A673 (cell line): ENCODE measurements at regions of chr4 and their contacts with region 1.

Region 1: GRCh38 chr4:6716018-6716911 is at the start of gene BLOC1S4:
- DNase-seq: peak; percentile 94
- H3K4me3 ChIP-seq: peak within 1 kb of the TSS; percentile 91
- H3K27ac ChIP-seq: peak within 1 kb of the TSS; percentile 80
- H3K4me1 ChIP-seq: peaks cover 6% of the 10 kb centered on the region
- H3K27me3 ChIP-seq: no peaks in the 10 kb centered on the region
- CTCF ChIP-seq: no peak
- total RNA-seq, gene BLOC1S4: 12.3 and 13.2 TPM in 2 replicates

Region 2: DNA sequence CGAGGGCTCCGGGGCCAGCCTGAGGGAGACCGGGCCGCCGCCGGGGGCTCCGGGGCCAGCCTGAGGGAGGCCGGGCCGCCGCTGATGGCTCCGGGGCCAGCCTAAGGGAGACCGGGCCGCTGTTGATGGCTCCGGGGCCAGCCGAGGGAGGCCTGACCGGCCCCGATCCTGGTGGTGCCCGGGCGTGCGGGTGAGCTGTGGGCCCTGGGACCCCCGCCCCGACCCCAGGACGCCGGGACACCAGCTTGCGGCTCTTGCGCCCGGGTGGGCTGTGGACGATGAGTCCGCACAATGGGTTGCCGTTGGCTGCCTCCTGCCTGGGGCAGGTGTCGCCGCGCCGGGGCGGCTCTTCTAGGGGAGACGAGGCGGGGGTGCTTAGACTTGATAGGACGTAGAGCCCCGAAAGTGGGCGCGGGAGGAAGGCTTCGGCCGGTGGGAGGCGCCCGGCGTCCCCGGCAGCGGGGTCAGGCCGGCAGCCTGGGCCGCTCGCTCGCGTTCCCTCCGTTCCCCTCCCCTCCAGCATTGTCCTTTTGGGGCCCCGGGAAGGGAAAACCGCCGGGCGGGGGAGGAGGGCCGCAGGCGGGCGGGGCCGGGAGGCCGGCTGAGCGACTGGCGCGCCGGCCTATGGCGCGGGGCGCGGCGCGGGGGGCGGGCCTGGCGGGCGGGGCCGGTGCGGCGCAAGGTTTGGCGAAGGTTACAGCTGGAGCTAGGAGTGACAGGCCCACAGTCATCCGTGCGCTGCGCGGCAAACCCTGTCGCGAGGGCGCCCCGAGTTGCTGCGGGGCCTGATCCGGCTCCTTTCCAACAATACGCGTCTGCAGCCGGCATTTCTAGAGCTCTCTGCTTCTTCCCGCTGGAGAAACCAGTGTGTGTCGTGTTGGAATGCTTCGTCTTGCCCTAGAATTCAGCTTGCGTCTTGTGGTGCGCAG is 67.1 kb after region 1 on chr4:
- CTCF ChIA-PET with region 1: no interaction called
- POLR2A ChIA-PET with region 1: no interaction called
- intact Hi-C with region 1: loop called (anchors 5 kb)
- DNase-seq: peak; percentile 94
- H3K4me3 ChIP-seq: peak overlapping the region; percentile 98
- H3K27ac ChIP-seq: peak overlapping the region; percentile 99
- H3K4me1 ChIP-seq: peaks cover 27% of the 10 kb centered on the region
- H3K27me3 ChIP-seq: no peaks in the 10 kb centered on the region
- CTCF ChIP-seq: peak; percentile 22; the same call in 1 of the 2 replicates

Region 3: DNA sequence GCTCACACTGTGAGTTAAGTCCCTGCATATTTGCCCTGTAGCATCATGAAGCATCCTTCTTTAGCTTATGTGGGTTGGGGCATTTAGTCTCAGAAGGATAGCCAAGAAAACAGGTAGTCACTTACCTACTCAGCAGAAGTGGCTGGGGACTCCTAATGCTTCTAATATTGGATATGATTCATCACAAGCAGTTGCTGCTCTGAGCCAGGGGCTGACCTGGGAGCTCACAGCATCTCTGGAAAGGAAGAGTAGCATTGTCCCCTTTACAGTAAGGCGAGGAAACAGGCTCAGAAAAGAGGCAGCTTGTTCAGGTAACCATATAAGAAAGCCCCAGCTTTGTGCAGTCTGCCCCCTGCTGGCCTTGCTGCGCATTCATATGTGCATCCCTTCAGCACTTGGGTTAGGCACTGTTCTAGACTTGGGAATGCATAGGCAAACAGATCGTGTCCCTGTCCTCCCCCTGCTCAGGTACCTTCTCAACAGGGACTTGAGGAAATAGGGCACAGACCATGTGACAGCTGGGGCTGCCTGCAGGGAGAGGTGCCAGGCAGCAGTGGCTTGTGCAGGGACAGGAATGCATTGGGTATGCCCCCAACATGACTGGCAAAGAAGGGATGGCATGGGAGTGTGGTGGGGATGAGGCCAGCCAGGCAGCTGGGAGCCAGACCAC is 157.7 kb after region 1 on chr4:
- CTCF ChIA-PET with region 1: interaction called, 31 read pairs
- POLR2A ChIA-PET with region 1: no interaction called
- intact Hi-C with region 1: loop called (anchors 1 kb)
- DNase-seq: peak; percentile 67
- H3K4me3 ChIP-seq: no peak overlapping the region
- H3K27ac ChIP-seq: no peak overlapping the region
- H3K4me1 ChIP-seq: no peaks in the 10 kb centered on the region
- H3K27me3 ChIP-seq: no peaks in the 10 kb centered on the region
- CTCF ChIP-seq: peak; percentile 84

Region 4: GRCh38 chr4:6986781-6987587 is 270.7 kb after region 1 on chr4:
- CTCF ChIA-PET with region 1: no interaction called
- POLR2A ChIA-PET with region 1: interaction called, 3 read pairs
- intact Hi-C with region 1: loop called (anchors 5 kb)
- DNase-seq: peak; percentile 95
- H3K4me3 ChIP-seq: peak overlapping the region; percentile 88
- H3K27ac ChIP-seq: peak overlapping the region; percentile 75
- H3K4me1 ChIP-seq: peaks cover 12% of the 10 kb centered on the region
- H3K27me3 ChIP-seq: no peaks in the 10 kb centered on the region
- CTCF ChIP-seq: no peak

Region 5: GRCh38 chr4:7067452-7068278 is 351.4 kb after region 1 on chr4 and contains the start of gene GRPEL1:
- CTCF ChIA-PET with region 1: interaction called, 3 read pairs
- POLR2A ChIA-PET with region 1: no interaction called
- intact Hi-C with region 1: loop called (anchors 2 kb)
- DNase-seq: peak; percentile 99
- H3K4me3 ChIP-seq: peak within 1 kb of the TSS; percentile 98
- H3K27ac ChIP-seq: peak within 1 kb of the TSS; percentile 85
- H3K4me1 ChIP-seq: peaks cover 6% of the 10 kb centered on the region
- H3K27me3 ChIP-seq: no peaks in the 10 kb centered on the region
- CTCF ChIP-seq: no peak
- total RNA-seq, gene GRPEL1: 70.1 and 78.2 TPM in 2 replicates